AG04449 (cell line): ENCODE measurements at regions of chr4 and their contacts with region 1.

Region 1: GRCh38 chr4:121462660-121463261 is 81.9 kb upstream of the QRFPR start:
- DNase-seq: peak; percentile 7
- H3K4me3 ChIP-seq: no peak overlapping the region
- CTCF ChIP-seq: peak; percentile 69

Region 2: DNA sequence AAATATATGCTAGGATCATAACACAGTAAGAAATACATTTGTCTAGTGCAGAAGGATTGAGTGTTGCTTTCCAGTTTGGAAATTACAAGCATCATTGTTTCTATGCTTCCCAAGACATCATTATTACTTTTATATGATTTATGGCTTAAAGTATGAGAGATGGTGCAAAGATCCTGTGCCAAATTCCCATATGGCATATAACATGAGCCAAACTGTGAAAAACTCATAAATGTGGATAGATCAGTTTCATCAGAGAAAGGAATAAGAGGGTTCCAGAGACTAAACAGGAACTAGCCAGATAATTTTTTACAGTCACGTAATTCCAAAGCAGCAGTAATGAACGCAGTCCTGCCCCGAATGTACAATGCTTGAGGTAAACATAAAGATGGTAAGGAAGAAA is 666.5 kb before region 1 on chr4:
- CTCF ChIA-PET with region 1: no interaction called
- POLR2A ChIA-PET with region 1: no interaction called
- DNase-seq: no peak
- H3K4me3 ChIP-seq: no peak overlapping the region
- CTCF ChIP-seq: no peak

Region 3: DNA sequence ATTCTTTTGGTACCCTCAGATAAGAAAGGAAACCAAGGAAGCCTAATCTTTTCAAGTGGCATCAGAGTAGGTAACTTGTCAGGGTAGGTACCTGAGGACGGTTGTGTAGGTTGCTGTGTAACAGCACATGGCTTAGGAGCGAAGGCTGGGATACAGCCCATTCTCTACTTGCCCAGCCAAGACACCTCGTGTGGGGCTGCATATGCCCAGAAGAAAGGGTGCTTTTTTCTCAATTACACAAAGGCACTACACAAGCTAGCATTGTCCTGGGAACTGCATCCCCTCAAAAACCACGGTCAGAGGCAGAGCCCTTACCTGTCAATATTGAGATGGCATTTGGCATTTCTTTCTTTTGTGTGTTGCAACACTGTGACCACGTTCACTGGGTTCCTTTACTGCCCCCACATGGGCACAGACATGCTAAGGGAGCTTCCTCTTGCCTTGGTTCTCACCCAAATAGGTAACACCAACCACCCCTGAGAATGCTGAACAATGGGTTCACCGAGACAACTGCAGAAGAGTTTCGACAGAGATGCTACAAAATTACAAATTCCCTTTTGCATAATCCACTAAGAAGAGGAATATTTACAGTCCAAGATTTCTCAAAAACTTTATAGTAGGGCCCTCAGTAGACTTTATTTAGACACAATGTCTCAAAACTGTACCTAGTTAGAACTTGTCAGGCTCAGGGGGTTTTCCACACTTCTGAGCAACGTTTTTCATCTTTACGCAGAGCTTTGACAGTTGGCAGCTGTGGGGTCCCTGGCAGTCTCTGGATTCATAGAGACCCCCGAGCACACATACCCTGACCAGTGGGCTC is 262.8 kb before region 1 on chr4:
- CTCF ChIA-PET with region 1: no interaction called
- POLR2A ChIA-PET with region 1: no interaction called
- DNase-seq: no peak
- H3K4me3 ChIP-seq: no peak overlapping the region
- CTCF ChIP-seq: no peak

Region 4: DNA sequence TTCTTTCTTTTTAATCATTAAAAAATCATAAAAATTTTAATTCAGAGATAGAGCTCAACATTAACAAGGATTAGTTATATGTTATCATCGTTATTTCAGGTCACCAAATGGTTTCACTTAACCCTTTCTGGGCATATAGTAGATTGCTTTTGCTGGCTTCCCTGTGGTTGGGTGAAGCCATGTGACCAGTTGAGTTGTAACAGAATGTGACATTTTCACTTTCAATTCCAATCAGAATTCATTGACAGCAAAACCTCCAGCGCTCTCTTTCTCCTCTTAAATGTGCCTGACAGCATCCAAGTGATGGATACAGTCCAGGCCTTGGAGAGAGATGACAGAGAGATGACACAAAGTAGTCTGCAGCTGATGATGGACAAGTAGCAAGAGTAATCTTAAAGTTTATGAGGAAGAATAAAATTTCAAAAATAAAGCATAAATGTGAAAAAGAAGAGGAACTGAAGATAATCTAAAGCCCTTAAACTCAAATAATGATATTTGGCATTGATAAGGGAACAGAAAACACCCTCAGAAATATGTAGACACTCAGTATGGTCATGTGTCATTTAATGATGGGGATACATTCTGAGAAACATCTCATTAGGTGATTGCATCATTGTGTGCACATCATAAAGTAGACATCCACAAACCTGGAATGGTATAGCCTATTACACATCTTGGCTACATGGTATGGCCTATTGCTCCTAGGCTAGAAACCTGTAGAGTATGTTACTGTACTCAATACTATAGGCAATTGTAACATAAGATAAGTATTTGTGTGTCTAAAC is 10.4 kb after region 1 on chr4:
- CTCF ChIA-PET with region 1: interaction called, 10 read pairs
- POLR2A ChIA-PET with region 1: no interaction called
- DNase-seq: no peak
- H3K4me3 ChIP-seq: no peak overlapping the region
- CTCF ChIP-seq: no peak

Region 5: GRCh38 chr4:121484633-121485032 is 21.9 kb after region 1 on chr4:
- CTCF ChIA-PET with region 1: interaction called, 15 read pairs
- POLR2A ChIA-PET with region 1: no interaction called
- DNase-seq: peak; percentile 7
- H3K4me3 ChIP-seq: no peak overlapping the region
- CTCF ChIP-seq: peak; percentile 74

Region 6: GRCh38 chr4:121656269-121656641 is 193.5 kb after region 1 on chr4:
- CTCF ChIA-PET with region 1: interaction called, 11 read pairs
- POLR2A ChIA-PET with region 1: no interaction called
- DNase-seq: no peak
- H3K4me3 ChIP-seq: no peak overlapping the region
- CTCF ChIP-seq: peak; percentile 45